H1 (cell line): ENCODE measurements at regions of chr13 and their contacts with region 1.

Region 1: DNA sequence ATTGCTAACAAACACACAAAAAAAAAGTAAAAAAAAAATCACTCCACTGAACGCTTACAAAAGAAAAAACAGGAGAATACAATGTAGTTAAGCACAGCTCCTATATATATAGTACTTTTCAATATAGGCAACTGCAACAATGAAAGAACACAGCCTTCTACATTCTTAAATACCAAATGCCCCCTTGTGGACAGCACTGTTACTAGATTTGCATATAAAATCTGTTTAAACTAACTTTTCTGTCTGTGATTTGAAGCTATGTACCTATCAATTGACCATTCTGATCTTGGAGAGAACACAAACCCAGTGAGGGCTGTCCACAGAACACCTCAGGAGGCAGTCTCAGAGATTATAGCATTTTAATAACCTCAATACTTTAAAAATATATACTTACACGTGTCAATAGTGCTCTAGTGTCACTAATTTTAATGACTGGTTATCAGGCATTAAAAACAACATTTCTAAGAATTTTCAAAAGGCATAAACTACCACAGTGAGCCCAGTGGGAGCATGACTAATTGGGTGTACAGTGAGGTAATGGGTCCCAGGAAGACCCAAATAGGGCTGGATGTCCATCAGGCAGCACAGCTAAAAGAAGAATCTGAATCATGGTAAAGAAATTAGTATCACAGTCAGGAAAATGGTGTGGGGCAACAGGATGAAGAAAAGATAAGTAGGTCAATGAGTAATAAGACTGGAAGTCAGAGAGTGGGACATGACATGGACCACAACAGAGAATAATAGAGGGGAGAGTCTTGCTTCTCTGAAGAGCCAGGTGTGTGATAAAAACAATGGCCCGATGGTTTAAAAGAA is 22.2 kb downstream of the CCDC169 start:
- DNase-seq: no peak
- H3K4me3 ChIP-seq: no peak overlapping the region
- H3K27ac ChIP-seq: no peak overlapping the region
- H3K4me1 ChIP-seq: no peaks in the 10 kb centered on the region
- H3K27me3 ChIP-seq: no peaks in the 10 kb centered on the region
- CTCF ChIP-seq: peak in 2 of 3 experiments; percentile 37 to 44; a peak in 2 of 4 replicates
- EP300 ChIP-seq: no peak
- POLR2A ChIP-seq: no peak
- RAD21 ChIP-seq: peak; percentile 63 to 73

Region 2: GRCh38 chr13:35988648-35989081 is 286.7 kb before region 1 on chr13:
- CTCF ChIA-PET with region 1: interaction called, 11 read pairs
- POLR2A ChIA-PET with region 1: interaction called, 3 read pairs
- DNase-seq: peak in 1 of 2 experiments; percentile 32
- H3K4me3 ChIP-seq: peak overlapping the region in 1 of 4 experiments; percentile 39; a peak in 2 of 8 replicates
- H3K27ac ChIP-seq: peak overlapping the region; percentile 44; the same call in 1 of the 2 replicates
- H3K4me1 ChIP-seq: peaks cover 16 to 55% (median 33%) of the 10 kb centered on the region in 4 experiments
- H3K27me3 ChIP-seq: no peaks in the 10 kb centered on the region
- CTCF ChIP-seq: no peak
- EP300 ChIP-seq: no peak
- POLR2A ChIP-seq: no peak
- RAD21 ChIP-seq: no peak

Region 3: GRCh38 chr13:36086117-36086516 is 189.3 kb before region 1 on chr13:
- CTCF ChIA-PET with region 1: interaction called, 12 read pairs
- POLR2A ChIA-PET with region 1: no interaction called
- DNase-seq: peak in 1 of 2 experiments; percentile 7
- H3K4me3 ChIP-seq: no peak overlapping the region
- H3K27ac ChIP-seq: no peak overlapping the region
- H3K4me1 ChIP-seq: peaks cover 0 to 8% (median 3%) of the 10 kb centered on the region in 4 experiments; a peak in 4 of 7 replicates
- H3K27me3 ChIP-seq: no peaks in the 10 kb centered on the region
- CTCF ChIP-seq: peak; percentile 43 to 48 (median 44); a peak in 3 of 4 replicates
- EP300 ChIP-seq: no peak
- POLR2A ChIP-seq: no peak
- RAD21 ChIP-seq: peak; percentile 55 to 63

Region 4: GRCh38 chr13:36261976-36262375 is 13.4 kb before region 1 on chr13:
- CTCF ChIA-PET with region 1: interaction called, 13 read pairs
- POLR2A ChIA-PET with region 1: interaction called, 3 read pairs
- DNase-seq: no peak
- H3K4me3 ChIP-seq: no peak overlapping the region
- H3K27ac ChIP-seq: no peak overlapping the region
- H3K4me1 ChIP-seq: peaks cover 0 to 4% (median 0%) of the 10 kb centered on the region in 4 experiments; a peak in 2 of 7 replicates
- H3K27me3 ChIP-seq: no peaks in the 10 kb centered on the region
- CTCF ChIP-seq: no peak
- EP300 ChIP-seq: no peak
- POLR2A ChIP-seq: no peak
- RAD21 ChIP-seq: no peak